Posterior vena cava (tissue), 2 donors: ENCODE measurements at regions of chr2 and their contacts with region 1.

Region 1: DNA sequence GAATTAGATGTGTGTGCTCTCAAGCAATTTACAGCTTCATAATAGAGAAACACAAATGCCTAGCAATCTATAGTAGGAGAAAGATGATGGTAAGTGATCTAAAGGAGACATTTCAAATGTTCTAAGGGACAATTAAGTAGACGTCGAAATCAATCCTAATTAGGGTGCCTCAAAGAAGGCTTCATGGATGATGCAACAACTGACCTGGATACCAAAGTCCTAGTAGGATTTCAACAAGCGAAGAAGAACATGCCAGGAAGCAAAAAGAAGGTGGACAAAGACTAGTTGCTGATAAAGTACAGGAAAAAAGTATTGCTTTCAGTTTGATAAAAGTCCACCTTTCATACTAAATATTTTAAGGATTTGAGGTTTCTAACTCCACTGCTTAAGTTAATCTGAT is 12.5 kb downstream of the FIGN start:
- DNase-seq: no peak

Region 2: GRCh38 chr2:163655667-163656066 is 67.7 kb before region 1 on chr2:
- intact Hi-C with region 1: loop called (anchors 2 to 10 kb)
- DNase-seq: no peak